ENCODE measurements at regions of chr9 and their contacts with region 1.

Region 1: DNA sequence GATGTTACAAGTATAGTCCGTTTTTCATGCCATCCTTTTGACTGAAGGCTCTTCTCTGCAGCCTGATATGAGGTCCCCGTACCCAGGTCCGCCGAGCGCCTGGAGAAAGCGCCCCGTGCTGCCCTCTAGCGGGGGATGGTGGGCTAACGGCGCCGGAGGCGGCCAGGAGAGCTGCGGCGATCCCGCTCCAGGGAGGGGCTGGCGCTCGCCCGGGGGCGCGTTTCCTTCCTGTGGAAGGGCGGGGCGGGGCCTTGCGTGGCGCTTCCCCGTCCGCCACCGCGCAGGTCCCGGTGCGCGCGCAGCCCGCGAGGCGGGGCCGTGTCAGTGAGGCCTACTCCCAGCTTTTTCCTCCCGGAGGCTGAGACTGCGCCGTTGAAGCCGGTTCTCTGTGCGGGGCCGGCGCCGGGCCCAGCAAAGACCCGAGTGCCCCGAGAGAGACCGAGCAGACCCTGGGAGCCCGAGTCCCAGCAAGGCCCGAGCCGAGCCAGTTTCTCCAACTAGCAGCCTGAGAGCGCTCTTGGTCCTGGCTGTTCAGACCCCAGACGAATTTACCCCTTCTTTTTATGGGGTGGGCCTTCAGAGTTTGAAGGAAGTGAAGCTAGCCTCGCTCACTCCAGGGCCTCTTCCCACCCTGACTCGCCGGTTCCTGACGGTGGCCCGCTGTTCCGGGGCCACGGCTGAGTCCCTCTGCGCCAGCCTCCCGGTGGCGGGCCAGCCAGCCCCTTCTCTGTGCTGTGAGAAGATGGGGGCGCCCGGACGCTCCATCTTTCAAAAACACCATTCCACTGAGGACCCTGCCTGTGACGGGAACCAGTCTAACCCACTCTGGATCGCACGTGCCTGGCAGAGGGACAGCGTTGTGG is 9.7 kb upstream of the PHF2 start:
- DNase-seq: peak; percentile 94 to 100 (median 99)

Region 2: DNA sequence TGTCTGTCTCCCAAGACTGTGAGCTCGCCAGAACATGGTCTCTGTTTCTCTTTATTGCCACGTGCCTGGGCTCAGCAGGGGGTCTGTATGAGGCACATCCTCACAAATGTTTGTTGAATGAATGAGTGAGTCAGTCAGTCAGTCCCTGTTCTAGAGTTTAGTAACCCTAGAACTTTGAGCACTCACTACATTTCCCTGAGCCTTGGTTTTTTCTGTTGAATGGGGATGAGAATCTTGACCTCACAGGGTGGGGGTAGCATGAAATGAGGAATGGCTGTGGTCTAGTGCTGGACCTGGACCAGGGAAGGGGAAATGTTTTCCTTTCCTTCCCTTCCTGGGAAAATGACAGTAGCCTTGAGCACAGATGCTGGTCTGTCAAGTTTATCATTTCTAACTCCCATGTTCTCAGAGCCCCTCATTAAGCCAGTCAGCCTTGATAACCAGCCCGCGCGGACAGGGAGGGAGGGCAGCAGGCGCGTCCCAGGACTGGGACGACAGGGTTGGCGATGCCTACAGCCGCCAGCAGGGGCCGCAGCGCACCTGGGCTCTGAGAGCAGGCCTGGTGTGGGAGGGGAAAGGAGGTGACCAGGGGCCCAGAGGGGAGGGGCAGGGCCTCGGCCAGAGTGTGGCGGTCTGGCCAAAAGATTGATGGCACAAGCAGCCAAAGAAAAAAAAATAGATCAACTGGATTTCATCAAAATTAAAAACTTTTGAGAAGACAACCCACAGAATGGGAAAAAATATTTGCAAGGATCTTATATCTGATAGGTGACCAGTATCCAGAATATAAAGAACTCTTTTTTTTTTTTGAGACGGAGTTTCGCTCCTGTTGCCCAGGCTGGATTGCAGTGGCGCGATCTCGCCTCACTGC is 406.8 kb before region 1 on chr9:
- intact Hi-C with region 1: loop called (anchors 10 kb)
- DNase-seq: peak; percentile 66 to 91 (median 84)

Region 3: DNA sequence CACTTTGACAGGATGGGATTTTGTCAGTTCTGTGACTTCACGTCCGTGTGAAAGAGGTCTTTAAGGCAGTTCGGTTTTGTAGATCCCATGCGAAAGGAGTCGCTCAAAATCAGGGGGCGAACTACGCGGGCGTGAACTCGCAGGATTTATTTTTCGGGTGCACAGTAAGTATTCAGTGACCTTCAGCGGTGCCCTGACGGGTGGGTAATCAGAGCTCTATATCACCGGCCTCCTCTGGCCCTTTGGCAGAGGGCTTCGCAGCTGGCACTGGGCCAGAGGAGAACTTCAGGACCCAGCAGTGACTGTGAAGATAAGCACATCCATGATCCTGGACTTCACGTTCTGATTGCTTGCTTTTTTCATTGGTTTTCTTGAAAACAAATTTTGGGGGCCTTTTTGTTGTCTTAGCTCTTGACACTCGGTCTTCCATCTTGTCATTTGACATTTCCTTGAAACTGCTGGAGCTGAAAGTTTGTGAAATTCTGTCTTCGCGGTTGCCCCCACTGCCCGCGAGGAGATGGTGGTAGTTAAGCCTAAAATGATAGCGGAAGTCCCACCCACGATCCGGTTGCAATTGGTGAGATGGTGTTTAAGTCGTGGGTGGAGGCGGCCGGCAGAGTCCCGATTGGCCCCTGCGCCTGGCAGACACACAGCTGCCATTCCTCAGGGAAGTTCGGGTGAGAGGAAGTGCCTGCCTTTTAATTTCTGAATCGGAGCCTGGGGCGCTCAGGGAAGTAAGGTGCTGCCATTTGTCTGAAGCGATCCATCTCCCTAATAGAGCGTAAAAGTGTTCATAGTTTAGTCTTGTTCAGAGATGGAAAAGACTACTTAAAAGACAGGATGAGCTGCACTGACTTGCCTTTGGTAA is 113.4 kb before region 1 on chr9 and contains the start of gene FAM120AOS:
- intact Hi-C with region 1: loop called (anchors 2 kb)
- DNase-seq: peak; percentile 91 to 98 (median 96)

Measured in head of caudate nucleus (tissue), 42 donors.